PC-9 (cell line): ENCODE measurements at regions of chr14 and their contacts with region 1.

Region 1: DNA sequence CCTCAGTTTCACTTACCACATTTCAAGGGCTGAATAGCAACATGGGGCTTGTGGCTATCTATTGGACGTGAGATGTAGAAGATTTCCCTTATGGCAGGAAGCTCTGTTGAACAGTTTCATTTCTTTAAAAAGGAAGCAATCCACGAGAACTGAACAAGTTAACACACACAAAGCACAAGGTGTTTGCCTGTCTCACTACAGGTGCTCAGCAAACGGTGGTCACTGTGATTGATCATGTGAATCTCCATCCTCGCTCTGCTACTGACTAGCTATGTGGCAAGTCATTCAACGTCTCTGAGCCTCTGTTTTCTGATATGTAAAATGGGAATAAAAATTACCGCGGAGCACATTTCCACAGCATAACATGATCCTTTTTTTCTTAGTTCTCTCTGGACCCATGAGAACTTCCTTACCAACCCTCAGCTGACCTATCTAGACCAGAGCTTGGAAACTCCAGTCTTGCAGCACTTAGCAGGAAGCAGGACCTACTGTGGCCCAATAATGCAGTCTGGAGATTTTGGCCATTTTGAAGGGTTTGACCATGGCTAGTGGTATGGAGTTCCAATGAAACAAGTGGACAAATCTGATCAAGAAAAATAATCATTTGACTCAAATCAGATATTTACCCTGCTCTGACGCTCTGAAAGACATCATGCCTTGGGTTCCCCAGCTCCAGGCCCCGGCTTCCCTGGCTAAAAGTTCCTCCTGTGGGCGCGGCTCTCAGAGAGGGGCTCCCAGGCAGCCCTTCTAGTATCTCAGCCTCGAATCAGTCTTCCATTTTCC is 278.8 kb downstream of the ZFP36L1 start:
- DNase-seq: no peak
- H3K4me3 ChIP-seq: no peak overlapping the region
- H3K27ac ChIP-seq: peak overlapping the region; percentile 83
- H3K4me1 ChIP-seq: peaks cover 61% of the 10 kb centered on the region
- H3K27me3 ChIP-seq: no peaks in the 10 kb centered on the region
- CTCF ChIP-seq: no peak

Region 2: GRCh38 chr14:68426661-68427549 is 87.1 kb before region 1 on chr14:
- CTCF ChIA-PET with region 1: no interaction called
- POLR2A ChIA-PET with region 1: no interaction called
- intact Hi-C with region 1: no loop called
- DNase-seq: no peak
- H3K4me3 ChIP-seq: no peak overlapping the region
- H3K27ac ChIP-seq: no peak overlapping the region
- H3K4me1 ChIP-seq: no peaks in the 10 kb centered on the region
- H3K27me3 ChIP-seq: no peaks in the 10 kb centered on the region
- CTCF ChIP-seq: no peak

Region 3: DNA sequence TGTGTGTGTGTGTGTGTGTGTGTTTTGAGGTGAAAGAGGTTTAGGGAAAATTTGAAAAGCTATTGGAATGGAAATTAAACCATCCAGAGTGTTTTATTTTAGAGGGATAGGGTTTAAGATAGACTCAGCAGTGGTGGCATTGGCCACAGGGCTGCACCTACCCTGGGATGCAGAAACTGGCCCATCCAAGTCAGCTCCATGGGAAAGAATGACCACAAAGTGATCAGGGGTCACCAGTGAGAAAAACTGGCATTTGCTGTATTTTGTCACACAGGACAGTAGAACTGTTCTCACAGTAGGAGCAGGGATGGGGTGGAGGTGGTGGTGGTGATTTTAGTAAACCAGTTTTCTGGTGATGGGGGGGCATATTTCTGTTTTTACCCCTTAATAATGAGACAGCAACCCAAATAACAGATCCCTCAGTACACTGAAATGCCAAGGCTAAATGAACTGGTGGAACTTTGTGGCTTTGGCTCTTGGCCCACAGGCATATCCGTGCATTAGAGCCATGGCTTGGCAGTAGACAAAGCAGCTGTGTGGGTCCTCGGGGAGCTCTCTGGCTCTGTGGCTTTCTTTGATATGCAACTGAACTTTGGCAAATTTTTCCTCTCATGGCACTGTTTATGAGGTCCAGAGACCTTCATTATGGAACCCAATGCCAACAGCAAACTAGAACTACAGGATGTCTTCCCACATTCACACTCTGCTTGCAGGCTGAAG is 69.4 kb before region 1 on chr14:
- CTCF ChIA-PET with region 1: no interaction called
- POLR2A ChIA-PET with region 1: no interaction called
- intact Hi-C with region 1: no loop called
- DNase-seq: no peak
- H3K4me3 ChIP-seq: no peak overlapping the region
- H3K27ac ChIP-seq: no peak overlapping the region
- H3K4me1 ChIP-seq: peaks cover 6% of the 10 kb centered on the region
- H3K27me3 ChIP-seq: no peaks in the 10 kb centered on the region
- CTCF ChIP-seq: no peak

Region 4: GRCh38 chr14:68589447-68590220 is 75.6 kb after region 1 on chr14:
- CTCF ChIA-PET with region 1: no interaction called
- POLR2A ChIA-PET with region 1: no interaction called
- intact Hi-C with region 1: no loop called
- DNase-seq: no peak
- H3K4me3 ChIP-seq: no peak overlapping the region
- H3K27ac ChIP-seq: no peak overlapping the region
- H3K4me1 ChIP-seq: peaks cover 34% of the 10 kb centered on the region
- H3K27me3 ChIP-seq: no peaks in the 10 kb centered on the region
- CTCF ChIP-seq: no peak

Region 5: DNA sequence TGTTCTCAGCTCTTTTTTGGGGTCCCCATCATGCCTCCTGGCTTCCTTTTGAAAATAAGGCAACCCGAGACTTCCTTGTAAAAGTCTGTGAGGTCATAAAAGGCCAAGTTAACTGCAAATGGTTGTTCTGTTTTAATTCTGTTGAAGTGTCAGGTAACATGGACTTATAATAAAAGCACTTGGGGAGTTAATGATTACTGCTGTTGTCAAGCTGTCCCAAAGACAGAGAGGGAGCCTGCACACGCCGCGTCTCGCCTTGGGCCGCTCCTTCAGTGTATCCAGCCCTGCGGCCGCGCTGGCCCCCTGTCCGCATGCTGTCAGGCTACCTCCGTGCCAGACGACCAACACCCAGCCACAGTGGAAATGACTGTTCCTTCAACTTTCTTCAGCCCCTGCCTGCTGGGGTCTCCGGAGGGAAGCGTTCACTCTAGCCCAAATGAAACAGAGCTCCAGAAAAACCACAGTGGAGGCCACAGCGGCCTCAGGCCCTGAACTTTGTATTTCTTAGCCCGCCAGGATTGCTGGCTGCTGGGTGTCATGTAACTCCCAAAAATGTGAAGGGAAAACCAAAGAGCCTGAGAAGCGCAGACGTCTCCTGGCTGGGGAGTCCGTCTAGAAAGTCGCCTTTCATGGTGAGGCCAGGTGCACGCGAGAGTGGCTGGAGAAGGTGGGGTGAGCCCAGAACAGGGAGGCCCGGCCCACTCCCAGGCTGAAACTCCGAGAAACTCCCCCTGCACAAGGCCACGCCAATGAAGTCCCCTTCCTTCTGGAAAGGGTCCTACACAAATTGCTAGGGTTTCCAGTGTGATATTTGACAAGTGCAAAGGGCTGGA is 89.7 kb after region 1 on chr14:
- CTCF ChIA-PET with region 1: no interaction called
- POLR2A ChIA-PET with region 1: interaction called, 10 read pairs
- intact Hi-C with region 1: no loop called
- DNase-seq: peak in 1 of 2 experiments; percentile 1
- H3K4me3 ChIP-seq: no peak overlapping the region
- H3K27ac ChIP-seq: no peak overlapping the region
- H3K4me1 ChIP-seq: peaks cover 26% of the 10 kb centered on the region
- H3K27me3 ChIP-seq: no peaks in the 10 kb centered on the region
- CTCF ChIP-seq: no peak

Region 6: GRCh38 chr14:68854421-68854820 is 340.4 kb after region 1 on chr14:
- CTCF ChIA-PET with region 1: no interaction called
- POLR2A ChIA-PET with region 1: no interaction called
- intact Hi-C with region 1: no loop called
- DNase-seq: no peak
- H3K4me3 ChIP-seq: no peak overlapping the region
- H3K27ac ChIP-seq: no peak overlapping the region
- H3K4me1 ChIP-seq: peaks cover 24% of the 10 kb centered on the region
- H3K27me3 ChIP-seq: no peaks in the 10 kb centered on the region
- CTCF ChIP-seq: no peak